Heart right ventricle (tissue), 16 donors: ENCODE measurements at regions of chr17 and their contacts with region 1.

Region 1: GRCh38 chr17:46742565-46743270 is 75.8 kb downstream of the WNT3 start:
- DNase-seq: peak in 1 of 2 donors; percentile 26
- ATAC-seq: peak; percentile 55 to 98 (median 88)
- H3K4me3 ChIP-seq: no peak overlapping the region
- H3K27ac ChIP-seq: peak overlapping the region in 6 of 10 donors; percentile 31 to 78 (median 53)
- H3K4me1 ChIP-seq: peaks cover 0 to 17% (median 5%) of the 10 kb centered on the region in 9 donors
- H3K27me3 ChIP-seq: no peaks in the 10 kb centered on the region
- CTCF ChIP-seq: no peak

Region 2: DNA sequence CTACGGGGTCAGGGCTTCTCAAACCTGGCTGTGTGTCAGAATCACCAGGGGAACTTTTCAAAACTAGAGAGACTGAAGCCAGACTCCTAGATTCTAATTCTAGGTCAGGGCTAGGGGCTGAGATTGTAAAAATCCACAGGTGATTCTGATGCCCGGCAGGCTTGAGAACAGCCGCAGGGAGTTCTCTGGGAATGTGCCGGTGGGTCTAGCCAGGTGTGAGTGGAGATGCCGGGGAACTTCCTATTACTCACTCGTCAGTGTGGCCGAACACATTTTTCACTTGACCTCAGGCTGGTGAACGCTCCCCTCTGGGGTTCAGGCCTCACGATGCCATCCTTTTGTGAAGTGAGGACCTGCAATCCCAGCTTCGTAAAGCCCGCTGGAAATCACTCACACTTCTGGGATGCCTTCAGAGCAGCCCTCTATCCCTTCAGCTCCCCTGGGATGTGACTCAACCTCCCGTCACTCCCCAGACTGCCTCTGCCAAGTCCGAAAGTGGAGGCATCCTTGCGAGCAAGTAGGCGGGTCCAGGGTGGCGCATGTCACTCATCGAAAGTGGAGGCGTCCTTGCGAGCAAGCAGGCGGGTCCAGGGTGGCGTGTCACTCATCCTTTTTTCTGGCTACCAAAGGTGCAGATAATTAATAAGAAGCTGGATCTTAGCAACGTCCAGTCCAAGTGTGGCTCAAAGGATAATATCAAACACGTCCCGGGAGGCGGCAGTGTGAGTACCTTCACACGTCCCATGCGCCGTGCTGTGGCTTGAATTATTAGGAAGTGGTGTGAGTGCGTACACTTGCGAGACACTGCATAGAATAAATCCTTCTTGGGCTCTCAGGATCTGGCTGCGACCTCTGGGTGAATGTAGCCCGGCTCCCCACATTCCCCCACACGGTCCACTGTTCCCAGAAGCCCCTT is 732.8 kb before region 1 on chr17:
- intact Hi-C with region 1: loop called in 1 of 10 experiments (anchors 5 kb)
- DNase-seq: no peak
- ATAC-seq: peak in 2 of 8 donors; percentile 11 to 65
- H3K4me3 ChIP-seq: no peak overlapping the region
- H3K27ac ChIP-seq: no peak overlapping the region
- H3K4me1 ChIP-seq: peaks cover 0 to 8% (median 0%) of the 10 kb centered on the region in 9 donors
- H3K27me3 ChIP-seq: no peaks in the 10 kb centered on the region
- CTCF ChIP-seq: no peak

Region 3: DNA sequence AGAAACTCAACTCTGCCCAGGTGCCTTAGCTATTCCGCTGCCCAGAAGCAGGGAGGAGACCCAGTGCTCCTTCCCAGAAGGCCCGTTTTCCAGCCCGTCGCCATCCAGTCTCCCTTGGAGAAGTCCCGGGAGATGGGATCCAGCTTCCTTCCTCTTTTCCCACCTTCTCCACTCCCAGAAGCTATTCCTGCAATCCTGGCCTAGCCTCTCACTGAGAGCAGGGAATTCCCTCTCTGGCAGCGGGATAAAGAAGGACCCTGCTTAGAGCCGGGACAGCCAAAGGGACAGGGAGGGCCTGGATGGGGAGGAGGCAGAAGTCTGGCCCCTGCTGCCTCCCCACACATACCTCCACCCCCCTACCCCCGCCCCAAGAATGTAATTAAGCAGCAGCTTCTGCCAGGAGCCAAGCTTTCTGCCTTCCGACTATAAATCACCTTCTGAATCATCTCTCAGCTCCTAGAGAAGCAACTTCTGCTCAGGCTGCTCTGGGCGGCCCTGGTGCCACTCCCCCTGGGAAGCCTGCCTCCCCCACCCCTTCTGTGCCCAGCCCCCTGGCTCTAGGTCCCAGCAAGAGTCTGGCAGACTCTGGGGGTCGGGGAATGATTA is 69.4 kb after region 1 on chr17:
- intact Hi-C with region 1: loop called in 2 of 10 experiments (anchors 10 kb)
- DNase-seq: no peak
- ATAC-seq: no peak
- H3K4me3 ChIP-seq: no peak overlapping the region
- H3K27ac ChIP-seq: no peak overlapping the region
- H3K4me1 ChIP-seq: no peaks in the 10 kb centered on the region
- H3K27me3 ChIP-seq: peaks cover 6 to 67% (median 52%) of the 10 kb centered on the region in 7 donors
- CTCF ChIP-seq: no peak

Region 4: DNA sequence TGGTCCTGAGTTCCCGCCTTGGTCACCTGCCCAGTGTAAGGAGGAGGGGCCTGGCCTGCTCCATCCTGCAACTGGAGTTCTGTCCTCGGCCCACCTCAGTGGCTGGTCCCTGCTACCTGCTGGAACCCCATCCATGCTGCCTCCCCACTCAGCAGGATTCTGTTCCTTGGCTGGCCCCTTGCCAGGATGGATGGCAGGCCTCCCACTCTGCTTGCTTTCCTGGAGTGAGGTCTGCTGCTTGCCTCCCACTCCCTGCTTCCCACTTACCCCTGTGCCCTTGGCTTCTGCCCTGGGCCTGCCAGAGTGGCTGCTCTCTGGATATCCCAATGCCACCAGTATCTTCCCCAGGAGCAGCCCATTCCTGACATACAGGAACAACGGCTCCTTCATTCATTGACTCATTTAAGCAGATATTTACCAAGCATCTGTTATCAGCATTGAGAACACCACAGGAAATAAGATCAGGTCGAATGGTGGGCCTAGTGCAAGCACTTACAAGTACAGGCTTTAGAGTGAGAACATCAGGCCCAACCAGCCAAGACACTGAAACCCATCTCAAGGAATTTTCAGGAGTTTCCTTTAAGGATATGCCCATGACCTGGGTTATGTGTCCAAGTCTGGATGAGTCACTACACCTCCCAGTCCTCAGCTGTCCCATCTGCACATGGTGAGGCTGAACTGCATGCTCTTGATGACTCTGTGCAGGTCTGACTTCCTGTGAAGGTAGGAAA is 253.3 kb after region 1 on chr17:
- intact Hi-C with region 1: no loop called
- DNase-seq: no peak
- ATAC-seq: peak in 1 of 8 donors; percentile 28
- H3K4me3 ChIP-seq: no peak overlapping the region
- H3K27ac ChIP-seq: no peak overlapping the region
- H3K4me1 ChIP-seq: peaks cover 0 to 2% (median 0%) of the 10 kb centered on the region in 9 donors
- H3K27me3 ChIP-seq: no peaks in the 10 kb centered on the region
- CTCF ChIP-seq: no peak